CD4-positive, alpha-beta memory T cell (primary cell): ENCODE measurements at regions of chr7 and their contacts with region 1.

Region 1: DNA sequence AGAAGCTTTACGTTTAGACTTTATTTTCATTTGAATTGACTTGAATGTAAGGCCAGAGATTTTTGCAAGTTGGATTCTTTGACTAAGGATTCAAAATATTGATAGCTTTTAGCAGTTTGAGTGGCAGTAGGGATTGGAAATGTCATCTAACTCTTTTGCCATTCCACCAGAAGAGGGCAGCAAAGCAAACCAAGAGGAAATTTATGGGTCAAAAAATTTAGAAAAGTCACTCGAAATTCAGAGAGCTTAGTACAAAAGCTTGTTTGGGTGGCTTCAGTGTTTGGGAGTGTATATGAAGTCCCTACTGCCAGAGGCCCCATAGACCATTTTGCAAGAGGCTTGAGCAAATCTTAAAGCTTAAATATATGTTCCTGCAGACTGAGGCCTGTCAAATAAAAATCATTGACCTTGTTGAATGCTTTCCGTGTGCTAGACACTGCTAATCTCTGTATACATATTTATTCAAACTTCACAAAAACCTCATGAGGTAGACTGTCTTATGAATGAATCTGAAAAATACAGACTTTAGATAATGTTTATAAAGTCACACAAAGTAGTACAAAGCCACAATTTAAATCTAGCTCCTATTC is 44.6 kb upstream of the RSBN1L start:
- DNase-seq: peak in 4 of 5 donors; percentile 36 to 48 (median 44)
- H3K4me3 ChIP-seq: no peak overlapping the region
- H3K4me3 Mint-ChIP-seq: no peak overlapping the region
- H3K27ac ChIP-seq: no peak overlapping the region
- H3K27ac Mint-ChIP-seq: no peak overlapping the region
- H3K4me1 ChIP-seq: no peaks in the 10 kb centered on the region
- H3K4me1 Mint-ChIP-seq: peaks cover 0 to 2% (median 0%) of the 10 kb centered on the region in 4 donors
- H3K27me3 ChIP-seq: no peaks in the 10 kb centered on the region
- H3K27me3 Mint-ChIP-seq: no peaks in the 10 kb centered on the region

Region 2: DNA sequence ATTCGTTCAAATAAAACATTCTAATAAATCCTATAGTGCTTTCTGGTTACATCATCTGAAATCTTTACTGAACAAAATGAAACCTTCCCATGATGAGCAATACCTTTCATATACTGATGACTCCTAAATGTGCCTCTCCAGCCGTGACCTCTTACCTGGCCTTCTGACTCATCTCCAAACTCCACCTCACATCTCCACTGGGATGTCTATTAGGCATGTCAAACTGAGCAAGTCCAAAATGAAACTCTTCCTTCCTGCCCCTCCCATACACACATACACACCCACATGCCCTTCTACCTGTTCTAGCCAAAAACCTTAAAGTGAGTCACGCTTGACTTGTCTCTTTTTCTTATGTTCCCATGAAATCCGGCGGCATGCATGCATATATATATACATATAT is 258.4 kb before region 1 on chr7:
- CTCF ChIA-PET with region 1: no interaction called
- POLR2A ChIA-PET with region 1: no interaction called
- intact Hi-C with region 1: no loop called
- DNase-seq: peak in 1 of 5 donors; percentile 55
- H3K4me3 ChIP-seq: no peak overlapping the region
- H3K4me3 Mint-ChIP-seq: peak overlapping the region in 5 of 8 donors; percentile 1 to 60 (median 13)
- H3K27ac ChIP-seq: no peak overlapping the region
- H3K27ac Mint-ChIP-seq: peak overlapping the region in 3 of 7 donors; percentile 1 to 73 (median 58)
- H3K4me1 ChIP-seq: peaks cover 9% of the 10 kb centered on the region
- H3K4me1 Mint-ChIP-seq: peaks cover 12 to 18% (median 13%) of the 10 kb centered on the region in 4 donors
- H3K27me3 ChIP-seq: no peaks in the 10 kb centered on the region
- H3K27me3 Mint-ChIP-seq: no peaks in the 10 kb centered on the region

Region 3: DNA sequence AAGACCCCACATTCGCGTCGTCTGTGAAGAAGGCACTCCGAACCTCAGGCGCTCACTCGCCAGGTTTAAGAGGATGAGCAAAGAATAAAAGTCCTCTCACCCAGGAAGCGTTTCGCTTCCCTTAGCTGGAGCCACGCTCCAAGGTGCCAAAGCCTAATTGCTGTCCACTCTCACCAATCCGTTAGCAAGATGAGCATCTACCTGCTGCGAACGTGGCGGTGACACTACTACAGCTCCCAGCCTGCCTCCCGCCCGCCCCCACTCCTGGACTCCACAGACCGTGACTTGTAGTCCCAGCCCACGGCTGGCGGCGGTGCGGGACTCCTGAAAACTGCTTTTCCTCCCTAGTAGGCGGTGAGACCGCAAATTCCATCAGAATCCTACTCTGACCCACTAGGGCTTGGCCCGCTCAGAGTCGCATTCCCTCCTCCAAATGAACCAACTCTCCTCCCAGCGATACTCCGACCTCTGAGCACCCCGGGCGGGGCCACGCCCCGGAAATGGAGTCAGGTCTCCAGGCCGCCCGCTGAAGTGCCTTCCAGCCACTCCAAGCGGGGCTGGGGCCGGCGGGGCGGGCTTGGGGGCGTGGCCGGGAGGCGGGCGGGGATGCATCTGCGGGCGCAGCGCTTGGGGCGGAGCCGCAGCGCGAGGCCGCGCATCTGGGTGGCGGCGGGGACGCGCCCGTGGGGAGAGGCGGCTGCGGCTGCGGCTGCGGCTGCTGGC is 115.1 kb before region 1 on chr7:
- CTCF ChIA-PET with region 1: interaction called, 4 read pairs
- POLR2A ChIA-PET with region 1: no interaction called
- intact Hi-C with region 1: loop called (anchors 1 kb)
- DNase-seq: peak; percentile 93 to 96 (median 94)
- H3K4me3 ChIP-seq: peak overlapping the region; percentile 76 to 95
- H3K4me3 Mint-ChIP-seq: peak overlapping the region; percentile 93 to 98 (median 98)
- H3K27ac ChIP-seq: peak overlapping the region; percentile 77
- H3K27ac Mint-ChIP-seq: peak overlapping the region; percentile 94 to 98 (median 96)
- H3K4me1 ChIP-seq: peaks cover 7% of the 10 kb centered on the region
- H3K4me1 Mint-ChIP-seq: peaks cover 6 to 28% (median 16%) of the 10 kb centered on the region in 4 donors
- H3K27me3 ChIP-seq: no peaks in the 10 kb centered on the region
- H3K27me3 Mint-ChIP-seq: no peaks in the 10 kb centered on the region

Region 4: GRCh38 chr7:77629797-77630196 is 21.9 kb before region 1 on chr7:
- CTCF ChIA-PET with region 1: interaction called, 12 read pairs
- POLR2A ChIA-PET with region 1: no interaction called
- intact Hi-C with region 1: no loop called
- DNase-seq: no peak
- H3K4me3 ChIP-seq: no peak overlapping the region
- H3K4me3 Mint-ChIP-seq: no peak overlapping the region
- H3K27ac ChIP-seq: no peak overlapping the region
- H3K27ac Mint-ChIP-seq: no peak overlapping the region
- H3K4me1 ChIP-seq: no peaks in the 10 kb centered on the region
- H3K4me1 Mint-ChIP-seq: no peaks in the 10 kb centered on the region
- H3K27me3 ChIP-seq: no peaks in the 10 kb centered on the region
- H3K27me3 Mint-ChIP-seq: no peaks in the 10 kb centered on the region

Region 5: GRCh38 chr7:77759294-77759889 is 107.7 kb after region 1 on chr7:
- CTCF ChIA-PET with region 1: interaction called, 176 read pairs
- POLR2A ChIA-PET with region 1: no interaction called
- intact Hi-C with region 1: loop called (anchors 1 kb)
- DNase-seq: peak; percentile 68 to 79 (median 73)
- H3K4me3 ChIP-seq: no peak overlapping the region
- H3K4me3 Mint-ChIP-seq: peak overlapping the region in 1 of 8 donors; percentile 28
- H3K27ac ChIP-seq: no peak overlapping the region
- H3K27ac Mint-ChIP-seq: peak overlapping the region in 6 of 7 donors; percentile 9 to 61 (median 36)
- H3K4me1 ChIP-seq: peaks cover 33% of the 10 kb centered on the region
- H3K4me1 Mint-ChIP-seq: peaks cover 29 to 51% (median 36%) of the 10 kb centered on the region in 4 donors
- H3K27me3 ChIP-seq: no peaks in the 10 kb centered on the region
- H3K27me3 Mint-ChIP-seq: no peaks in the 10 kb centered on the region

Region 6: DNA sequence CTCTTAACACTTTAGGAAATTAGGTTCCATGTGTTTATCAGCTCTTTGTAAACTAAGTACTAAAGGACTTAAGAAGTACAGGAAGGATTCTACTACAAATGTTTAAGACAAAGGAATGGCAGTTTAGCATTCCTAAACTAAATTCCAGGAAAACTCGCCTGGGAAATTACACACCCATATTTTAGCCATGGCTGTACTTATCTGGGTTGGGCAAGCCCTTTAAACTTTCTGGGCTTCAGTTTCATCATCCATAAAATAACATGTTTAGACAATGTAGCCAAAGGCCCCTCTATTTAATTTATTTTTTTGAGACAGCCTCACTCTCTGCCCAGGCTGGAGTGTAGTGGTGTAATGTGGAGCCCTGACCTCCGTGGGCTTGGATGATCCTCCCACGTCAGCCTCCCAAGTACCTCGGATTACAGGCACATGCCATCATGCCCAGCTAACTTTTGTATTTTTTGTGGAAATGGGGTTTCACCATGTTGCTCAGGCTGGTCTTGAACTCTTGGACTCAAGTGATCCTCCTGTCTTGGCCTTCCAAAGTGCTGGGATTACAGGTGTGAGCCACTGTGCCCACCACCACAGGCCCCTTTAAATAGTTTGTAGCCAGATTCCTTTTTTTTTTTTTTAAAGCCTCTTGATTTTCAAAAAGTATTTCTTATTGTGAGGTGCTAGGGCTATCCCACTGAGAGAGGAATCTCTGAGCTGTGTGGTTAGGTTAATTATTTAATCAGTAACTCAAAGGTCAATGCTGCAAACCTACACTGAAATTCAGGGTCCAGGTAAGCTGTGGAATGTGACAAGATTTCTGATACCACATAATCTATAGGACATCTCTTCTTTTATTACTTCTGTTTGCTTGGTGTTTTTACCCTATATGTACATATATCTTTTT is 114.5 kb after region 1 on chr7:
- CTCF ChIA-PET with region 1: interaction called, 176 read pairs
- POLR2A ChIA-PET with region 1: no interaction called
- intact Hi-C with region 1: no loop called
- DNase-seq: no peak
- H3K4me3 ChIP-seq: no peak overlapping the region
- H3K4me3 Mint-ChIP-seq: no peak overlapping the region
- H3K27ac ChIP-seq: no peak overlapping the region
- H3K27ac Mint-ChIP-seq: peak overlapping the region in 5 of 7 donors; percentile 21 to 80 (median 46)
- H3K4me1 ChIP-seq: peaks cover 10% of the 10 kb centered on the region
- H3K4me1 Mint-ChIP-seq: peaks cover 19 to 36% (median 22%) of the 10 kb centered on the region in 4 donors
- H3K27me3 ChIP-seq: no peaks in the 10 kb centered on the region
- H3K27me3 Mint-ChIP-seq: no peaks in the 10 kb centered on the region

Region 7: GRCh38 chr7:77940647-77941046 is 289.0 kb after region 1 on chr7:
- CTCF ChIA-PET with region 1: interaction called, 17 read pairs
- POLR2A ChIA-PET with region 1: no interaction called
- intact Hi-C with region 1: loop called (anchors 5 kb)
- DNase-seq: no peak
- H3K4me3 ChIP-seq: no peak overlapping the region
- H3K4me3 Mint-ChIP-seq: no peak overlapping the region
- H3K27ac ChIP-seq: no peak overlapping the region
- H3K27ac Mint-ChIP-seq: no peak overlapping the region
- H3K4me1 ChIP-seq: peaks cover 2% of the 10 kb centered on the region
- H3K4me1 Mint-ChIP-seq: peaks cover 7 to 20% (median 11%) of the 10 kb centered on the region in 4 donors
- H3K27me3 ChIP-seq: no peaks in the 10 kb centered on the region
- H3K27me3 Mint-ChIP-seq: no peaks in the 10 kb centered on the region

Region 8: DNA sequence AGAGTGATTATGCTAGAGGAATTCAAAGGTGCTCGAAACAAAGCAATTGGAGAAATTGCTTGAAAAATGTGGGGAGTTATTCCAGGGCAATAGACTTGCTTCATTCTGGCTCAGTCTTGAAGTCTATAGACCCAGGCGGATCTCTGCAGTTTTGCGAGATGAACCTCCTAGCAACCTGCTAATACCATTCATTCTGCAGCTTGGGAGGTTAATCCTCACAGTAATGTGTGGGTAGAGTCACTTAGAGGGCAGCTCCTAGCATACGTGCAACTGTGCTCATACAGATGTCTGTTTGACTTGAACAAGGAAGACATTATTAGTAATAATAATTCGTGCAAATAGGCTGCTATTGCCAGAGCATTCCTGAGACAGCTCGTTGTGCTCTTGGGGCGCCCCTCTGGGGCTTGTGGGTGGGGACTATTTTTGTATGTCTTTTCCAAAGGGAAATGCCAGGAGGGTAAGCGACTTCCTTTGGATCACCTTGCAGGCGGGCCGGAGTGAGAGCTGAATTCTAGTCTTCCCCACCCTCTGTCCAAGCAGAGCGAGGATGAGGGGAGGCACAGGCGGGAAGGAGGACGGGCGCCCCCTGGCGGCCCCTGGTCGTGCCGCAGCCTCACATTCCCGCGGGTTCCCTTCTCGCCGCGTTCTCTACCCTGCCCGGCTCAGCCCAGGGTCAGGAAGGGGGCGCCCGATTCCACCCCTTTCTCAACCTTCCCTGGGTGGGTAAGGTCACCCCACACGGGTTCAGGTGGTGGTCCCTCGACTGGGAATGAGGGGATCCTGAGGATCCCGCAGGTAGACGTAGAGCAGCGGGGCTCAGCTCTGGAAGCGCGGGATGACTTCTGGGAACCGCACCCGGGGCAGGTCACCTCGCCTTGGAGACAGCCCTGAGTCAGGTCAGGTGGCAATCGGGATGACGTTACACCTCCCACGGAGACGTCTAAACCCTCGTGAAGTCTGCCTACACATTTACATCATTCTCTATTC is 388.4 kb after region 1 on chr7:
- CTCF ChIA-PET with region 1: interaction called, 86 read pairs
- POLR2A ChIA-PET with region 1: no interaction called
- intact Hi-C with region 1: loop called (anchors 2 kb)
- DNase-seq: peak in 4 of 5 donors; percentile 14 to 49 (median 40)
- H3K4me3 ChIP-seq: no peak overlapping the region
- H3K4me3 Mint-ChIP-seq: no peak overlapping the region
- H3K27ac ChIP-seq: no peak overlapping the region
- H3K27ac Mint-ChIP-seq: no peak overlapping the region
- H3K4me1 ChIP-seq: no peaks in the 10 kb centered on the region
- H3K4me1 Mint-ChIP-seq: peaks cover 0 to 8% (median 1%) of the 10 kb centered on the region in 4 donors
- H3K27me3 ChIP-seq: peaks cover 5% of the 10 kb centered on the region
- H3K27me3 Mint-ChIP-seq: peaks cover 3 to 18% of the 10 kb centered on the region in 2 donors